Mammary epithelial cell (primary cell): ENCODE measurements at regions of chr11 and their contacts with region 1.

Region 1: DNA sequence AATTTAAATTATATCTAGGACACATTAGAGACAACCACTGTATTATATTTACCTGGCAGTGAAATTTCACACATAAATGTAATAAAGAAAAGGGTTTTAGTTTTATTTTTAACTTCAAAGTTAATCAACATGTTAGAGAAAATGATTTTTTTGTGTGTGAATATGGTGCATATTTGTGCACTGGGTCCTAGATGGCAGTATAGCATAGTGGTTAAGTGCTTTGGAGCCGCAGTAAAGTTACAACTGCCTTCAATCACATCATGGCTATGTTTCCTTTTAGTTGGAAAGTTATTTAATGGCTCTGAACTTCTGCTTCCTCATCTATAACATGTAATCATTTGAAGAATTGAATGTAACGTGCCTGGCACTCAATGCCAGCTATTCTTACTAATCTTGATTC is 108.9 kb upstream of the DDI1 start:
- DNase-seq: peak; percentile 15
- H3K4me3 ChIP-seq: no peak overlapping the region
- H3K27ac ChIP-seq: no peak overlapping the region
- H3K4me1 ChIP-seq: peaks cover 12% of the 10 kb centered on the region
- H3K27me3 ChIP-seq: no peaks in the 10 kb centered on the region
- CTCF ChIP-seq: peak; percentile 59 to 69

Region 2: DNA sequence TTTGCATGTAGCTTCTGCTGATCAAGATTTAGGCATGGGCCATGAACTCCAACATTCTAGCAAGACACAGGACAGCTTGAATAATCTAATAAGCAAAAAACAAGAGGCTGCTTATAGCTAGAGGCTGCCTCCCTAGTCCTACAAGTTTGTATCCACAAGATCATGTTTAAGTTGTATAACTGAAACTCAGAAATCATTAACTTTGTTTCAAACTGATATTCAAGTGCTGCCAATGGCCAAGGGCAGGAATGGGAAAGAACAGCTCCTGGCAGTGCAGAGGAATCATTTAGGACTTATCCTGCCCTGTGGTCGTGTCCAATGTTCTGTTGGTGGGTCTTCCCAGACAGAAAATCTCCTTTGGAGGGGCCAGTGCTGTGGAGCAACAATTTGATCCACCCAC is 100.7 kb before region 1 on chr11:
- CTCF ChIA-PET with region 1: interaction called, 14 read pairs
- dilution Hi-C with region 1: no loop called
- in situ Hi-C with region 1: no loop called
- intact Hi-C with region 1: no loop called
- DNase-seq: no peak
- H3K4me3 ChIP-seq: no peak overlapping the region
- H3K27ac ChIP-seq: no peak overlapping the region
- H3K4me1 ChIP-seq: no peaks in the 10 kb centered on the region
- H3K27me3 ChIP-seq: no peaks in the 10 kb centered on the region
- CTCF ChIP-seq: no peak

Region 3: GRCh38 chr11:104151404-104152204 is 224.1 kb after region 1 on chr11:
- CTCF ChIA-PET with region 1: no interaction called
- dilution Hi-C with region 1: no loop called
- in situ Hi-C with region 1: loop called in 1 of 2 experiments (anchors 10 kb)
- intact Hi-C with region 1: loop called (anchors 1 kb)
- DNase-seq: no peak
- H3K4me3 ChIP-seq: no peak overlapping the region
- H3K27ac ChIP-seq: no peak overlapping the region
- H3K4me1 ChIP-seq: no peaks in the 10 kb centered on the region
- H3K27me3 ChIP-seq: no peaks in the 10 kb centered on the region
- CTCF ChIP-seq: peak; percentile 44

Region 4: GRCh38 chr11:104254347-104254746 is 326.8 kb after region 1 on chr11:
- CTCF ChIA-PET with region 1: no interaction called
- dilution Hi-C with region 1: no loop called
- in situ Hi-C with region 1: no loop called
- intact Hi-C with region 1: loop called (anchors 10 kb)
- DNase-seq: peak; percentile 33
- H3K4me3 ChIP-seq: no peak overlapping the region
- H3K27ac ChIP-seq: no peak overlapping the region
- H3K4me1 ChIP-seq: no peaks in the 10 kb centered on the region
- H3K27me3 ChIP-seq: no peaks in the 10 kb centered on the region
- CTCF ChIP-seq: peak; percentile 82 to 83